Adrenal gland (tissue), 19 donors: ENCODE measurements at regions of chr1 and their contacts with region 1.

Region 1: DNA sequence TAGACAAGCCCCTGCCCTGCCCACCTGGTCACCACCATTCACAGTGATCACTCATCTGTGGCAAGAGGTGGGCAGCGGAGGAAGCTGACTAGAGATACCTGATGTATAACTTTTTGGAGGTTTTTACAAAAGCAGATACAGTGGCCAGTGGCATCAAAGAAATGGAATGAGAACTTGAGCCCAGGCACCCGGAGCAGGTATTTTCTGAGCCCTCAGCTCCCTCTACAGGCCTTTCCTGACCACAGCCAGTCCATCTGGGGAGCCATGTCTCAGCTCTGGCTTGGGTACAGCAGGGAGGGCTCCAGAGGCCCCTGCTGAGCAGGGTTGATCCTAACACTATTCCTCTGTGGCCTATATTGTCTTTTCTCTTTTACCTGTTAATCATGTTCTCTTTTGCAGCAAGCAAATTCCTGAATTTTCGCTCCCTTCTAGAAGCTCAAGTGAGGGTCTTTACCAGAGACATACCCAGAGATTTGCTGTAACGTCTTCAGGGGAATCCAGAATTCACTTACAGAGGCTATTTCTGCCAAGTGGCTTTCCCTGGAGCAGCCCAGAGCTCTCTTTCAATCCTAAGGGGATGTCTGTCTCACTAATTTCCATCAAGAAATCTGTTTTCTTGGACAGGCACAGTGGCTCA is 27.3 kb downstream of the GPR157 start:
- DNase-seq: peak in 5 of 7 donors; percentile 40 to 66 (median 50)
- H3K4me3 ChIP-seq: no peak overlapping the region
- H3K27ac ChIP-seq: no peak overlapping the region
- H3K4me1 ChIP-seq: no peaks in the 10 kb centered on the region
- H3K27me3 ChIP-seq: no peaks in the 10 kb centered on the region
- CTCF ChIP-seq: peak; percentile 13 to 61 (median 44)
- POLR2A ChIP-seq: no peak

Region 2: DNA sequence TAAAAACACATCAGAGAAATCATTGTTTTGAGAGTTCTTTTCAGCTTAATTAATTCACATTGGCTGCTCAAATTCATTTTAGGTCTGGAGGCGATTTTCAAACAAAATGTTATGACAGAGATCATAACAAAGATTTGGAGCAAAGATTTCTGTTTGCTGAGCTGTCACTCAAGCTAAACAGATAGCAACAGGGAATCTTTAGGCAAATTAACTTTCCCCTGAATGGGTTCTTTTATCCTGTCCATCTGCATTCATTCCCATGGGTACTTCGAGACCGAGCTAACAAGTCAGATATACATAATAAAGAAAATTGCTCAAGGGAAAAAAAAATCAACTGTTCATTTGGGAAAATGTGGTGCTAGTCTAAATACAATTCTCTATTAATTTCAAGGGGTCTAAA is 186.2 kb before region 1 on chr1:
- intact Hi-C with region 1: loop called (anchors 5 to 10 kb)
- DNase-seq: no peak
- H3K4me3 ChIP-seq: no peak overlapping the region
- H3K27ac ChIP-seq: no peak overlapping the region
- H3K4me1 ChIP-seq: no peaks in the 10 kb centered on the region
- H3K27me3 ChIP-seq: no peaks in the 10 kb centered on the region
- CTCF ChIP-seq: no peak
- POLR2A ChIP-seq: no peak

Region 3: DNA sequence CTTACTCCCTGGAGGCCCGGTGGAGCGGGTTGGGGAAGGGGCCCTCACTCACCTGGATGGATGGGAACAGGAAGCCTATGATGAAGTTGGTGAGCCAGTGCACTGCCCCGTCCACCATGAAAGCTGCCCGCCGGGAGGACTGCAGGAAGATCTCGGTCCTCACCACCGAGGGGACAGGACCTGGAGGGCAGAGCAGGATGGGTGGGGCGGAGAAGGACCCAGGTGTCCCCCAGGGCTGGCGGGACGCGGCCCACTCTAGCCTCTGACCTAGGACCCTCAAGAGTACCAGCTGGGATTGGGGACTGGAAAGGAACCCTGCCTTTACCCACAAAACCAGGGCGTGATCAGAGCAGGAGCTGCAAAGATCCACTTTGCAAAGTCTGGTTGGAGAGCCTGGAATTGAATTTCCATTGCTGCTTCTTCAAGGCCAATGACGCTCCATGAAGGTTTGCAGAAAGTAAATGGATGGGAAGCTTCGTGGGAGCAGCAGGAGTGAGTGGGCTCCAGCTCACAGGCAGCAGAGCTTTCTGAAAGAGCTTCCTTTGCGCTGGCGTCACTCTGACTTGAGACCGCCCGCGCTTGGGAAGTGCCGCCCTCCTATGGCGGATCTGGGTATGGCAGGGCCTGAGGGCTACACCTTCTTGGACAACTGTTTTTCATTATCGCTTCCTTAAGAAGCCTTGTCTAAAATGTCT is 96.8 kb before region 1 on chr1:
- intact Hi-C with region 1: loop called (anchors 5 kb)
- DNase-seq: peak; percentile 65 to 87 (median 82)
- H3K4me3 ChIP-seq: no peak overlapping the region
- H3K27ac ChIP-seq: no peak overlapping the region
- H3K4me1 ChIP-seq: no peaks in the 10 kb centered on the region
- H3K27me3 ChIP-seq: no peaks in the 10 kb centered on the region
- CTCF ChIP-seq: peak; percentile 74 to 95 (median 84)
- POLR2A ChIP-seq: no peak